ENCODE measurements at regions of chr20 and their contacts with region 1.

Region 1: GRCh38 chr20:33460711-33461110 is 17.1 kb upstream of the SNTA1 start:
- DNase-seq: no peak
- ATAC-seq: no peak
- H3K4me3 ChIP-seq: no peak overlapping the region
- H3K27ac ChIP-seq: no peak overlapping the region
- H3K4me1 ChIP-seq: no peaks in the 10 kb centered on the region
- H3K27me3 ChIP-seq: no peaks in the 10 kb centered on the region
- CTCF ChIP-seq: no peak

Region 2: GRCh38 chr20:33654680-33655161 is 194.0 kb after region 1 on chr20:
- intact Hi-C with region 1: loop called in 1 of 3 experiments (anchors 5 kb)
- DNase-seq: peak in 3 of 6 donors; percentile 29 to 80 (median 66)
- ATAC-seq: peak in 3 of 4 donors; percentile 0 to 45 (median 1)
- H3K4me3 ChIP-seq: no peak overlapping the region
- H3K27ac ChIP-seq: peak overlapping the region; percentile 77 to 91 (median 82)
- H3K4me1 ChIP-seq: peaks cover 21 to 27% (median 26%) of the 10 kb centered on the region in 3 donors
- H3K27me3 ChIP-seq: no peaks in the 10 kb centered on the region
- CTCF ChIP-seq: no peak

Region 3: GRCh38 chr20:33663161-33664094 is 202.7 kb after region 1 on chr20:
- intact Hi-C with region 1: loop called in 2 of 3 experiments (anchors 5 kb)
- DNase-seq: peak; percentile 80 to 93 (median 86)
- ATAC-seq: peak; percentile 51 to 73 (median 64)
- H3K4me3 ChIP-seq: peak overlapping the region; percentile 72 to 89 (median 75)
- H3K27ac ChIP-seq: peak overlapping the region; percentile 72 to 87 (median 84)
- H3K4me1 ChIP-seq: peaks cover 0 to 17% (median 7%) of the 10 kb centered on the region in 3 donors
- H3K27me3 ChIP-seq: no peaks in the 10 kb centered on the region
- CTCF ChIP-seq: no peak